Tibial artery (tissue), 4 donors: ENCODE measurements at regions of chr14 and their contacts with region 1.

Region 1: GRCh38 chr14:58244556-58245387 is at the start of gene PSMA3:
- DNase-seq: peak; percentile 99
- H3K4me3 ChIP-seq: peak within 1 kb of the TSS; percentile 77 to 80
- H3K27ac ChIP-seq: peak within 1 kb of the TSS; percentile 92 to 93
- H3K4me1 ChIP-seq: peaks cover 0 to 27% (median 18%) of the 10 kb centered on the region in 4 donors
- H3K27me3 ChIP-seq: no peaks in the 10 kb centered on the region
- CTCF ChIP-seq: no peak

Region 2: DNA sequence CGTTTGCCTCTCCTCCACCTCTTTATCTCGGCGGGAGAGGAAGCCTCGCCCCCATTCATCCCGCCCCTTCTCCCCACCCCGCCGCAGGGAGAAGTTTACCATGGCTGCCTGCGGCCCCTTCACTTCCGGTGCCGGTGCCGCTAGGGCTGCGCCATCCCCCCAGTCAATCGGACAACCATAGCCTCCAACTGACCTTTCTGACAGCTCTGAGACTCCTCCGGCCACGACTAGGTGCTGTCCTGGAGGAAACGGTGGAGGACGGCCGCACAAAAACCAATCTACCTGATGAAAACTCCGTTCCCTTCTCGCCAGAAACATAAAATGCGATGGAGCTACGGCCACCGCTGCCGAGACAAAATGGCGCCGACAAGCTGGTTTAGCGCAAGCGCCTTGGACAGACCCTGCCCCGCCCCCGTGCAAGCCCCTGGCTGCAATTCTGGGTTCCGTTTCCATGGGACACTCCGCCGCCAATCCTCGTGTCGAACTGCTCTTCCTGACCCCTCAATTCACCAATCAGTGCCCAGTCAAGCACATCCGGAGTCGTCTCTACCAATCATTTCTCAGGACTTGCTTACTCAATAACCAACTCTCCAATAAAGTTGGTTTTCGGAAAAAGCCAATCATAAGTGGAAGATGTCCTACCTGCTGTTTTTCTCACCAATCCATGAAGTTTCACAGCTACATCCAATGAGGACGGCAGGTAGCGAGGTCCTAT is 53.1 kb after region 1 on chr14:
- intact Hi-C with region 1: loop called (anchors 5 kb)
- DNase-seq: peak; percentile 97 to 99
- H3K4me3 ChIP-seq: peak overlapping the region; percentile 92 to 99
- H3K27ac ChIP-seq: peak overlapping the region; percentile 93 to 97
- H3K4me1 ChIP-seq: peaks cover 0 to 50% (median 19%) of the 10 kb centered on the region in 4 donors
- H3K27me3 ChIP-seq: no peaks in the 10 kb centered on the region
- CTCF ChIP-seq: peak in 1 of 2 experiments; percentile 61

Region 3: GRCh38 chr14:58712357-58712756 is 467.6 kb after region 1 on chr14:
- intact Hi-C with region 1: no loop called
- DNase-seq: no peak
- H3K4me3 ChIP-seq: no peak overlapping the region
- H3K27ac ChIP-seq: no peak overlapping the region
- H3K4me1 ChIP-seq: peaks cover 0 to 13% (median 2%) of the 10 kb centered on the region in 4 donors
- H3K27me3 ChIP-seq: no peaks in the 10 kb centered on the region
- CTCF ChIP-seq: no peak